Common myeloid progenitor, CD34-positive (primary cell): ENCODE measurements at regions of chr6 and their contacts with region 1.

Region 1: DNA sequence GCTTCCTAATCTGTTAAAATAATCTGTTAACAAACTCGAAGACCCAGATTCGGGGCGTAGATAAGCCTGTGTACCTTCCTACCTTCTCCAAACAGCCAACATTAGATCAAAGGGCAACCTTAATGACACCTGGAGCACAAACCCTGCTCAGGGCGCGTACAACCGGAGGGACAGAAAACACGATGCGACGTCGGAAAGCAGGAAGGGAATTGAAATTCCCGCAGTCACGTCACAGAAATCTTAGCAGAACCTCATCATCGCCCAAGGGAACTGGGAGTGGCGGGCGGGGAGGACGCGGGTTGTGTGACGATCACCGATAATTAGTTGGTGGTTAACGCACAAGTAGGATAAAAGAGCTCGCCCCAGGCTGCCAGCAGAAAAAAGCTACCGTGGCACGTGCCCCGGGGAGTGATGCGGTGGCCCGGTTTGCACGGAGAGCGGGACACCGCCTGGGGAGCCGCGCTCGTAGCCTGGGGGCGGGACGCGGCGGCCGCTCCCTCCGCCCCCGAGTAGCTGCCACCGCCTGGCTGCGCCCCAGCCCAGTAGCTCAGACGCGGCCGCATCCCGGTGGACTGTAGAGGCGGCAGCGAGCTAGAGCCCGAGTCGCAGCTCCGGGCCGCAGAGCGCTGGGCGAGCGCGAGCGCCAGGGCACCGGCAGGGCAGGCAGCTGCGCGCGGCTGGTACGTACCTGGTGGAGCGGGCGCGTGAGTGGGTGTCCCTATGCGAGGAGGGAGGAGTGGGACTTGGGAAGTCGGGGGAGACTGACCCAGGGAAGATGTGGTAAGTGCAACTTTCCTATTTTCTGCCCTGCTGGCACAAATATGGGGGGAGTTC is at the start of gene PKIB:
- DNase-seq: peak; percentile 76 to 85 (median 81)
- H3K4me3 ChIP-seq: peak within 1 kb of the TSS; percentile 53 to 88 (median 74)
- H3K27ac ChIP-seq: no peak within 1 kb of the TSS
- H3K4me1 ChIP-seq: peaks cover 2 to 21% (median 18%) of the 10 kb centered on the region in 4 experiments
- H3K27me3 ChIP-seq: peaks cover 0 to 47% (median 25%) of the 10 kb centered on the region in 5 experiments

Region 2: GRCh38 chr6:122730775-122731386 is 120.8 kb after region 1 on chr6:
- CTCF ChIA-PET with region 1: interaction called, 18 read pairs
- POLR2A ChIA-PET with region 1: no interaction called
- DNase-seq: peak in 2 of 3 donors; percentile 61 to 71
- H3K4me3 ChIP-seq: no peak overlapping the region
- H3K27ac ChIP-seq: no peak overlapping the region
- H3K4me1 ChIP-seq: no peaks in the 10 kb centered on the region
- H3K27me3 ChIP-seq: peaks cover 0 to 12% (median 8%) of the 10 kb centered on the region in 5 experiments

Region 3: GRCh38 chr6:122995921-122996793 is 386.1 kb after region 1 on chr6 and contains the start of gene CLVS2:
- CTCF ChIA-PET with region 1: no interaction called
- POLR2A ChIA-PET with region 1: no interaction called
- DNase-seq: peak in 2 of 3 donors; percentile 15 to 32
- H3K4me3 ChIP-seq: peak within 1 kb of the TSS in 3 of 7 experiments; percentile 36 to 42 (median 40)
- H3K27ac ChIP-seq: no peak within 1 kb of the TSS
- H3K4me1 ChIP-seq: peaks cover 0 to 8% (median 3%) of the 10 kb centered on the region in 4 experiments
- H3K27me3 ChIP-seq: peaks cover 12 to 58% (median 40%) of the 10 kb centered on the region in 5 experiments